Activated CD8-positive, alpha-beta T cell treated with anti-CD3 and anti-CD28 coated beads for 36 hours (primary cell): ENCODE measurements at regions of chr2 and their contacts with region 1.

Region 1: GRCh38 chr2:190853531-190854383 is 26.9 kb upstream of the GLS start:
- DNase-seq: no peak
- ATAC-seq: no peak
- H3K4me3 Mint-ChIP-seq: no peak overlapping the region
- H3K27ac Mint-ChIP-seq: no peak overlapping the region
- H3K4me1 Mint-ChIP-seq: peaks cover 8% of the 10 kb centered on the region
- H3K27me3 Mint-ChIP-seq: no peaks in the 10 kb centered on the region
- CTCF ChIP-seq: no peak

Region 2: GRCh38 chr2:190468814-190469569 is 384.8 kb before region 1 on chr2:
- CTCF ChIA-PET with region 1: no interaction called
- POLR2A ChIA-PET with region 1: no interaction called
- intact Hi-C with region 1: no loop called
- DNase-seq: no peak
- ATAC-seq: no peak
- H3K4me3 Mint-ChIP-seq: no peak overlapping the region
- H3K27ac Mint-ChIP-seq: peak overlapping the region; percentile 19
- H3K4me1 Mint-ChIP-seq: peaks cover 49% of the 10 kb centered on the region
- H3K27me3 Mint-ChIP-seq: no peaks in the 10 kb centered on the region
- CTCF ChIP-seq: no peak

Region 3: DNA sequence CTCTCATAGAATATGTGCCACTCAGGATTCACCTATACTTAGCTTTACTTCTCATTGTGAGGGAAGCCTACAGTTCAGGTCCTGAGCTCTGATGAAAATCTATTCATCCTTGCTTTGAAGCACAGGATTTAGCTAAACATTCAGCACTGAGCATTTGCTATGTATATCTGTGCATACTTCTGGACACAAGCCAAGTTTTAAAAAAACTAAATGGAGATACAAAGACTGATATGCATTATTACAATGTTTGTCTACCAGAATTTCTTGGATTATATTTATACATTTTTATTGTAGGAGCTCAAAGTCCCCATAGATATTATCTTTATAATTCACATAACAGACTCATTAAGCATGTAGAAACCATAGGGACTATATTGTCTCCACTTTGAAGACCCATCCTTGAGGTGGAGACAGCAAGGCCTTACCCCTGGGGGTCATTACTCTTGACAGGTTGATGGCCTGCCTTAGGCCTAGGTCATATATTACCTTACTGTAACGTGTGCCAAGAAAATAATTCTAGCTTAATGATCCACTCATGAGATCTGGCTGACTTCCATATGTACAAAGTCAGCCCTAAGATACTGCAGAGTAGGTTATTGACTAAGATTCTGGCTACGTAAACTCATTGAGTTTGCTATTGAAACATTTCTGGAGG is 38.7 kb before region 1 on chr2:
- CTCF ChIA-PET with region 1: interaction called, 10 read pairs
- POLR2A ChIA-PET with region 1: no interaction called
- intact Hi-C with region 1: no loop called
- DNase-seq: no peak
- ATAC-seq: no peak
- H3K4me3 Mint-ChIP-seq: no peak overlapping the region
- H3K27ac Mint-ChIP-seq: no peak overlapping the region
- H3K4me1 Mint-ChIP-seq: peaks cover 3% of the 10 kb centered on the region
- H3K27me3 Mint-ChIP-seq: no peaks in the 10 kb centered on the region
- CTCF ChIP-seq: no peak

Region 4: GRCh38 chr2:190863946-190864345 is 10.2 kb after region 1 on chr2:
- CTCF ChIA-PET with region 1: interaction called, 24 read pairs
- POLR2A ChIA-PET with region 1: no interaction called
- intact Hi-C with region 1: no loop called
- DNase-seq: no peak
- ATAC-seq: no peak
- H3K4me3 Mint-ChIP-seq: no peak overlapping the region
- H3K27ac Mint-ChIP-seq: no peak overlapping the region
- H3K4me1 Mint-ChIP-seq: peaks cover 24% of the 10 kb centered on the region
- H3K27me3 Mint-ChIP-seq: no peaks in the 10 kb centered on the region
- CTCF ChIP-seq: no peak

Region 5: DNA sequence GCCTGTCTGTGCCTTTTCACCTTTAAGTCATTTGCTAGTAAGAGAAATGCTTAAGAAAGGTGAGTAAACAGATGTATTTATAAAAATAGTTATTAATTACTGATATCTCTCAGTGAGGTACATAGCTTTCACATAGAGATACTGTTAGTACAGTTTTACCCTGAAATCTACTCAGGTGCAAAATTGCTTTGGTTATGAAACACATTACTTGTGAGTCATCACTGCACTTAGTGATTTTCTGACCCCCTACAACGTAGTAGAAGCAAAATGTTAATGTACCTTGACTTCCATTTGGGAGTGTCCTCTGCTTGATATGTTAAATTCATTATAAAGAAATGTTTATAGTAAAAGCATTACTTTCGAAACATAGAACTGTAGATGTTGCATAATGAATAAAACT is 33.3 kb after region 1 on chr2:
- CTCF ChIA-PET with region 1: interaction called, 24 read pairs
- POLR2A ChIA-PET with region 1: interaction called, 18 read pairs
- intact Hi-C with region 1: no loop called
- DNase-seq: no peak
- ATAC-seq: peak; percentile 59
- H3K4me3 Mint-ChIP-seq: peak overlapping the region; percentile 49
- H3K27ac Mint-ChIP-seq: no peak overlapping the region
- H3K4me1 Mint-ChIP-seq: peaks cover 64% of the 10 kb centered on the region
- H3K27me3 Mint-ChIP-seq: no peaks in the 10 kb centered on the region
- CTCF ChIP-seq: no peak

Region 6: GRCh38 chr2:190922376-190922775 is 68.6 kb after region 1 on chr2:
- CTCF ChIA-PET with region 1: no interaction called
- POLR2A ChIA-PET with region 1: no interaction called
- intact Hi-C with region 1: no loop called
- DNase-seq: no peak
- ATAC-seq: no peak
- H3K4me3 Mint-ChIP-seq: no peak overlapping the region
- H3K27ac Mint-ChIP-seq: peak overlapping the region; percentile 14
- H3K4me1 Mint-ChIP-seq: peaks cover 35% of the 10 kb centered on the region
- H3K27me3 Mint-ChIP-seq: no peaks in the 10 kb centered on the region
- CTCF ChIP-seq: no peak

Region 7: GRCh38 chr2:190947711-190948251 is 94.0 kb after region 1 on chr2:
- CTCF ChIA-PET with region 1: interaction called, 21 read pairs
- POLR2A ChIA-PET with region 1: interaction called, 3 read pairs
- intact Hi-C with region 1: loop called (anchors 5 kb)
- DNase-seq: peak; percentile 36
- ATAC-seq: peak; percentile 81
- H3K4me3 Mint-ChIP-seq: no peak overlapping the region
- H3K27ac Mint-ChIP-seq: peak overlapping the region; percentile 70
- H3K4me1 Mint-ChIP-seq: peaks cover 22% of the 10 kb centered on the region
- H3K27me3 Mint-ChIP-seq: no peaks in the 10 kb centered on the region
- CTCF ChIP-seq: no peak

Region 8: GRCh38 chr2:191650896-191651773 is 797.4 kb after region 1 on chr2:
- CTCF ChIA-PET with region 1: no interaction called
- POLR2A ChIA-PET with region 1: no interaction called
- intact Hi-C with region 1: no loop called
- DNase-seq: no peak
- ATAC-seq: peak; percentile 86
- H3K4me3 Mint-ChIP-seq: no peak overlapping the region
- H3K27ac Mint-ChIP-seq: no peak overlapping the region
- H3K4me1 Mint-ChIP-seq: peaks cover 8% of the 10 kb centered on the region
- H3K27me3 Mint-ChIP-seq: no peaks in the 10 kb centered on the region
- CTCF ChIP-seq: no peak